ENCODE measurements at regions of chr10 and their contacts with region 1.

Region 1: GRCh38 chr10:91006001-91006751 is 85.3 kb upstream of the ANKRD1 start:
- H3K4me3 ChIP-seq: no peak overlapping the region
- H3K27ac ChIP-seq: no peak overlapping the region
- H3K4me1 ChIP-seq: no peaks in the 10 kb centered on the region
- CTCF ChIP-seq: peak; percentile 82

Region 2: DNA sequence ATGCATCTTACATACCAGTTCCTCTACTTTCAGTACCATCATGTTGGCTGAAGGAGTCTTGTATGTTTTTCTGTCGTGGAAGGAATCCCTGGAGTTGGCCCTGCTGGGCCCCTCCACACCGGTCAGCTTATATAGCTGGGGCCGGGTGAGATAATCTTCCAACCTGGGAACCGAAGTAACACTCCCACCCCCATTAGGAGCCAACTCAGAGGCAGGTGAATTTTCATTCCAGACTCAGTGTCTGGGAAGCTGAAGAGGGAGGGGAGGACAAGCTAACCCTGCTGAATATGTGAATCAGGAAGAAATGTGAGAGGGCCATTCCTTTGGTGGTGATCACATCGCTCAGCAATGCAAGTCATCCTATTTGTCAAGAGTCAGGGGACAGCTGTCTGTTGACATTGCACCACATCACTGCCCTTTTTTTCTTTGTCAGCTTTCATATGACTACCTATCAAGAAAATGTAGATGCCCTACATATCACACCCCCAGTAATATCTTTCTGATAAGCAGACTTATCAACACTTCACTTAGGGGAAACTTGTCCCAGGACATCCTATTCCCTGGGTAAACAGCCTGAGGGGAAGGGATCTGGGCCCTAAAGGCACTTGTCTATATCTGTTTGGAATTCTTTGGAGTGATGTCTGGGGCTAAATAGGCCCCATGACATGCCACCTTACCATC is 85.0 kb before region 1 on chr10 and contains the start of gene ANKRD1:
- CTCF ChIA-PET with region 1: interaction called, 12 read pairs
- POLR2A ChIA-PET with region 1: no interaction called
- H3K4me3 ChIP-seq: peak within 1 kb of the TSS; percentile 37
- H3K27ac ChIP-seq: no peak within 1 kb of the TSS
- H3K4me1 ChIP-seq: peaks cover 6% of the 10 kb centered on the region; the same call in 1 of the 2 replicates
- CTCF ChIP-seq: no peak

Region 3: GRCh38 chr10:91017198-91017597 is 11.0 kb after region 1 on chr10:
- CTCF ChIA-PET with region 1: interaction called, 13 read pairs
- POLR2A ChIA-PET with region 1: no interaction called
- H3K4me3 ChIP-seq: no peak overlapping the region
- H3K27ac ChIP-seq: no peak overlapping the region
- H3K4me1 ChIP-seq: no peaks in the 10 kb centered on the region
- CTCF ChIP-seq: no peak

Region 4: DNA sequence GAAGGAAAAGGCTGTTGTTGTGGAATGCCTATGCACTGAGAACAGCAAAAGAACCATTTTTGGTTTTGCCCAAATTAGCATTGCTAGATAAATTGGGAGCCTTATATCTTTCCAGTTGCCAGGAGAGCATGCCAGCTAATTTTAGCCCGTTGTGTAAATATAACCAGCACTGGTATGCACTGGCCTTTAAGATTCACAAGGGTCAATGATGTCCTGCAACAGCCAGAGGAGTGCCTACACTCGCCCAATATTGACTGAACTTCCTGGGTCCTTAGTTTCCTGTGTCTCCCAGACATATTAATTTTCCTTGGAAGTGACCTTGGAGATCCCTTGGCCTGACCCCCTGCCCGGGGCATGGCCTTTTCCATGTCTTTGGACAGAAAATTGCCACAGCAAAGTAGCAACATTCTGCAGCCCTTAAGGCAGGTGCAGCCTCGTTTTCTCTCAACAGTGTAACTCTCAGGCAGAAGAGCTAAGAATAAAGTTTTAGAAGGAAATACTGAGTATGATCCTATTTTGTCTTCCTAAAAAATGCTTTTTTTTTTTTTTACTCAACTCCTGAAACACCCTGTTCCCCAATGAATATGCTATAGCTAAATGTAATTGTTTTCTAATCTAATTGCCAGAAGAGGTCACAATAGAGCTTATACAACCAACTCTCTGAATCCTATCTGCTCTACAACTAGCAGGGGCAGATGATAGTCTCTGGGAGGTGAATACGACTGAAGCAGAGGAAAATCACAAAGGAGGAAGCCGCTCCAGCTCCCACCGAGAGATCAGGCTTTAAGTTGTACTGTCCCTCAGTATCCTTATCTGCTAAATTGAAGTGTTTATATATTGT is 82.3 kb after region 1 on chr10:
- CTCF ChIA-PET with region 1: interaction called, 12 read pairs
- POLR2A ChIA-PET with region 1: no interaction called
- H3K4me3 ChIP-seq: no peak overlapping the region
- H3K27ac ChIP-seq: no peak overlapping the region
- H3K4me1 ChIP-seq: no peaks in the 10 kb centered on the region
- CTCF ChIP-seq: no peak